ENCODE measurements at regions of chr16 and their contacts with region 1.

Region 1: DNA sequence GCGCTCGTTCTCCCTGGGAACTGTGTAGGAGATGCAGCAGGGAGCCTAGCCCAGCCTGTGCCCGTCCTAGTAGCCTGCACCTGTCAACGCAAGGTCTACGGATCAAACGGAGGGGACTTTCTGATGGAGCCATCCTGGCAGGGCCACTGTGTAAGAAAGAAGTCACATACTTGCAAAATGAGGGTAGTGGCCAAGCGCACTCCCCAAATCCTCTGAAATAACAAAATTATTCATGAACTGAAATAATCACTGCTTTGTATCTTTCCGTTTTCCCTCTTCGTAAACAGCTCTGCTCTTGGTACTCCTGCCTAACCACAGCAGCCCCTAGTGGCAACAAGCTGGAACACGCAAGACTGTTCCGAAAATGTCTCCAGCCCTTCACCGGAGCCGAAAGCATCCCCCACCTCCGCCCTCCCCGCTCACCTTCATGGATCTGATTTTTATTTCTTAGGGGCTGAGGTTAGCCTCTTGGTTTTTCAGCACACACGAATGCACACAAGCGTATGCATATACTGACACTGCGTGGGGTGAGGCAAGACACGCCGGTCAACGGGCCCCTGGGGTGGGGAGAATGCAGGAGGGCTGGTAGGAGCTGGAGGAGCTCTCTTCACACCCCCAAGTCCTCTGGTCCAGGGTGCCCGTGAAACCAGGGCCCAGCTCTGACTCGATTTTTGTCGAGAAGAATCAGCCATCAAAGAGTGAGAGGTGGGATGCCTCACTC is 100.8 kb downstream of the ABCC12 start:
- DNase-seq: peak in 2 of 9 donors; percentile 13 to 29
- ATAC-seq: peak; percentile 44
- H3K4me3 ChIP-seq: no peak overlapping the region
- H3K4me3 Mint-ChIP-seq: no peak overlapping the region
- H3K27ac ChIP-seq: no peak overlapping the region
- H3K27ac Mint-ChIP-seq: no peak overlapping the region
- H3K4me1 ChIP-seq: no peaks in the 10 kb centered on the region
- H3K4me1 Mint-ChIP-seq: peaks cover 0 to 5% (median 0%) of the 10 kb centered on the region in 7 donors
- H3K27me3 ChIP-seq: no peaks in the 10 kb centered on the region
- H3K27me3 Mint-ChIP-seq: peaks cover 14 to 28% (median 22%) of the 10 kb centered on the region in 5 donors

Region 2: DNA sequence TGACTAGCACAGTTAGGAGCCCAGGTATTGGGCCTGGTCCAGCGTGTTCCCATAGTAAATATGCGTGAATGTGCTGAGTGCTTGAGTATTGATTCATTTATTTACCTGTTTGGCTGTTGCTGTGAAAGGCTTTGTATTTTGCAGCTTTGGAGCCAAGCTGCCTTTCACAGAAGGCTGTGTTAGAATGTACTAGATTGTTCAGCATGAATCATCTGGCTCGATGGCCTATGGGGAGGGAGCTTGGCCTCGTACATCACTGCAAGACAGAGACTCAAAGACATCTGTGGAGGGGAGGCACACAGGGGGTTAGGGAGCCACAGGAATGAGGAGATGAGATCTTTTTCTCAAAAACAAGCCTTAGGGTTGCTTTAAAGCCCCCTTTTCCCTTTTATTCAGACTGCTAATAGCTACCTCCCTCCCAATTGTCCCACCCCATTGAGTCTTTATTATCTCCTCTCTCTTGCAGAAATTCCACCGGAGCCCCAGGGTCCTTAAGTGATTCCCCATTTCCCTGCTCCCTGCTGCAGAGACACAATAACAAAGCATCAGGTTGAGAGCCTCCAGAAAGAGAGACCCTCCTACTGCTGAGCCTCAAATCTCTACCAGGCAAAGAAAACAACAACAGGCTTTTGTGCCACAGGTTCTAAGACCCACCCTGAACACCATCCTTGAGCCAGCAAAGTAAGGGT is 206.5 kb before region 1 on chr16:
- CTCF ChIA-PET with region 1: no interaction called
- POLR2A ChIA-PET with region 1: no interaction called
- intact Hi-C with region 1: no loop called
- DNase-seq: no peak
- ATAC-seq: no peak
- H3K4me3 ChIP-seq: no peak overlapping the region
- H3K4me3 Mint-ChIP-seq: no peak overlapping the region
- H3K27ac ChIP-seq: no peak overlapping the region
- H3K27ac Mint-ChIP-seq: no peak overlapping the region
- H3K4me1 ChIP-seq: no peaks in the 10 kb centered on the region
- H3K4me1 Mint-ChIP-seq: no peaks in the 10 kb centered on the region
- H3K27me3 ChIP-seq: no peaks in the 10 kb centered on the region
- H3K27me3 Mint-ChIP-seq: peaks cover 0 to 4% (median 0%) of the 10 kb centered on the region in 5 donors

Region 3: DNA sequence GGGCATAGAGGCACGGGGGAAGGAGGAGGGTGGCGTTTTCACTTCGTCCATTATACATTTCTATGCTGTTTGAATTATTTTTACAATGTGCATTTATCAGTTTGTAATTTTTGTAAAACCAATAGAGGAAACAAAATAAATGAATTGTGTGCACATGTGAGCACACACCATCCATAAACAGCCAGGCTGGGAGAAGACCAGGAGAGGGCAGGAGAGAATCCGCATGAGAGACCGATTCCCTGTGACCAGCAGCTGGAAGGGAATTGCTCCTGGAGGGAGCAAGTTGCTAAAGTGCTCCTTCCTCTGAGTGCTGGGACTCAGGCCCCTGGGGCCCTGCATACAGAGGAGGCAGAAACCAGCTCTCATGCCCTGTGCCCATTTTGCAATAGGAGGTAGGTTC is 25.3 kb before region 1 on chr16:
- CTCF ChIA-PET with region 1: no interaction called
- POLR2A ChIA-PET with region 1: no interaction called
- intact Hi-C with region 1: no loop called
- DNase-seq: no peak
- ATAC-seq: no peak
- H3K4me3 ChIP-seq: no peak overlapping the region
- H3K4me3 Mint-ChIP-seq: no peak overlapping the region
- H3K27ac ChIP-seq: no peak overlapping the region
- H3K27ac Mint-ChIP-seq: no peak overlapping the region
- H3K4me1 ChIP-seq: no peaks in the 10 kb centered on the region
- H3K4me1 Mint-ChIP-seq: no peaks in the 10 kb centered on the region
- H3K27me3 ChIP-seq: no peaks in the 10 kb centered on the region
- H3K27me3 Mint-ChIP-seq: peaks cover 0 to 21% (median 10%) of the 10 kb centered on the region in 5 donors

Region 4: DNA sequence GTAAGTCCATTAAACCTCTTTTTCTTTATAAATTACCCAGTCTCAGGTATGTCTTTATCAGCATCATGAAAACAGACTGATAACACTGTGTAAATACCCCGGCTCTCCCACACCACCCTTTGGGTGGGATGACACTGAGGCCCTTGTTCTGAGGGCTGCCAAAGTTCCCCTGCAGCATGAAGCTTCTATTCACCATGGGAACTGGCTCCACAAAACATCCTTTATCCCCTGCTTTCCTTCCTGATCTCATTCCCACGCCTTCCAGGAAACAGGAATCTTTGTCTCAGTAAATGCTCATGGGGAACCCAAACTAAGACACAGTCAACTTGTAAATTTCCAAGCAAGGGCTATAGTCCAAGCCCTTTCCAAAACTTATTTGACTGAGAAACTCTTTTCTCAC is 12.3 kb after region 1 on chr16:
- CTCF ChIA-PET with region 1: no interaction called
- POLR2A ChIA-PET with region 1: no interaction called
- intact Hi-C with region 1: no loop called
- DNase-seq: no peak
- ATAC-seq: no peak
- H3K4me3 ChIP-seq: no peak overlapping the region
- H3K4me3 Mint-ChIP-seq: no peak overlapping the region
- H3K27ac ChIP-seq: no peak overlapping the region
- H3K27ac Mint-ChIP-seq: no peak overlapping the region
- H3K4me1 ChIP-seq: no peaks in the 10 kb centered on the region
- H3K4me1 Mint-ChIP-seq: no peaks in the 10 kb centered on the region
- H3K27me3 ChIP-seq: no peaks in the 10 kb centered on the region
- H3K27me3 Mint-ChIP-seq: peaks cover 0 to 28% (median 15%) of the 10 kb centered on the region in 5 donors

Region 5: DNA sequence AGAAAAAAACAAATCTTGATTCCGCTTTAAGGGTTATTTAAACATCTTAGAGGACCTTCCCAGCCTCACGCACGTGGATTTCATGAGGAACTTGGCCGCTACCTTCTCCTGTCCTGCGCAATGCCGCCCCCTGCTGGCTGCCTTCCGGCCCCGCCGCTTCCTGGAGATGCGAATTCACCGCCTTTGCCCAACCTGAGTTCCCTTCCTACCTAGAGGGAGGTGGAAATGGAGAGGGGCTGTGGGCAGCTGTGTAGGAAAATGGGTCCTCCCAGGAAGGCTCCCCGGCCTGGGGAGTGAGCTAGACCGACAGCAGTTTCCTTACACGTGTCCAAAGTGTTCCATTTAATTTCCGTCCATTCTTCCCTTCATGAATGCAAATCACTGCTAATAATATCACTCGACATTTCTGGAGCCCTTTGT is 101.8 kb after region 1 on chr16:
- CTCF ChIA-PET with region 1: no interaction called
- POLR2A ChIA-PET with region 1: no interaction called
- intact Hi-C with region 1: loop called in 1 of 2 experiments (anchors 5 kb)
- DNase-seq: peak; percentile 33 to 89 (median 69)
- ATAC-seq: peak; percentile 88
- H3K4me3 ChIP-seq: no peak overlapping the region
- H3K4me3 Mint-ChIP-seq: no peak overlapping the region
- H3K27ac ChIP-seq: no peak overlapping the region
- H3K27ac Mint-ChIP-seq: no peak overlapping the region
- H3K4me1 ChIP-seq: no peaks in the 10 kb centered on the region
- H3K4me1 Mint-ChIP-seq: peaks cover 0 to 23% (median 0%) of the 10 kb centered on the region in 7 donors
- H3K27me3 ChIP-seq: no peaks in the 10 kb centered on the region
- H3K27me3 Mint-ChIP-seq: peaks cover 0 to 41% (median 9%) of the 10 kb centered on the region in 5 donors